IMR-90 (cell line): ENCODE measurements at regions of chr6 and their contacts with region 1.

Region 1: GRCh38 chr6:125314019-125314581 is 12.3 kb upstream of the HDDC2 start:
- DNase-seq: peak; percentile 61
- ATAC-seq: peak; percentile 88
- H3K4me3 ChIP-seq: no peak overlapping the region
- H3K27ac ChIP-seq: no peak overlapping the region
- H3K4me1 ChIP-seq: no peaks in the 10 kb centered on the region
- H3K27me3 ChIP-seq: peaks cover 11% of the 10 kb centered on the region
- CTCF ChIP-seq: peak; percentile 87
- POLR2A ChIP-seq: no peak
- RAD21 ChIP-seq: peak; percentile 80

Region 2: DNA sequence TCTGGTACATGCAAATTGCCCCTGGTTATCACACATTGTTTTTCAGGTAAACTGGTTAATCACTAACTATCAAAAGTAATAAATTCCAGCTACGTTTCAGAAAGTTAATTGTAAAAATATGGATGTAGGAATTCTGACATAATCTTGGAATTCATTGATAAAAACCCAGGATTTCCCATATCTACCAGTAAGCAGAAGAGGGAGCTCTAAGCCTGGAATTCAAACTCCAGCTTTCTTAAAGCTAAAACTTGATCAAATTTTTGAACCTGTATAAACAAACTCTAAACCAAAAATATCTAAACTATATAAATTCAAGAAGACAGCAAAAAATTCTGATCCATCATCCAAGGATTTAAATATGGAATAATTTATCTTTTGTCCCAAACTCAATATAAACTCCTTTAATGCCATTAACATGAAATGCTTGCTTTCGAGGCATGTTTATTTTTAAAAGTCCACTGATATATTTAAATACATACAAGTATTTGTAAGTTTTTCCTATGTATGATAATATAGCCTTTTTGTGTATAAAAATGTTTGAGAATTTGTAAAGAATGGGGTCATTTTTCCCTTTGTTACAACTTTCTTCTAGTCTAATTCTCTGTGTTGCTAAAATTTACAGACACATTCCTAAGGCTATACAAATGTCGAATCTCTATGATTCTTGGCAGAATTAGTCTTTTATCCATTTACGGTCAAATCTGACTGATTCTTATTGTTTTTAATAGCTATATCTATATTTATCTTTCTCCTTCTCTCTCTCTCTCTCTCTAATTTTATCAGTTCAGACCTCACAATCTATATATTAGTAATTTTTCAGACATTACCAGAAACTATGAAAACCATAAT is 443.3 kb before region 1 on chr6:
- CTCF ChIA-PET with region 1: no interaction called
- POLR2A ChIA-PET with region 1: no interaction called
- dilution Hi-C with region 1: no loop called
- in situ Hi-C with region 1: loop called (anchors 5 kb)
- intact Hi-C with region 1: loop called (anchors 1 kb)
- DNase-seq: peak; percentile 64
- ATAC-seq: peak; percentile 67
- H3K4me3 ChIP-seq: no peak overlapping the region
- H3K27ac ChIP-seq: no peak overlapping the region
- H3K4me1 ChIP-seq: peaks cover 2% of the 10 kb centered on the region; the same call in 1 of the 2 replicates
- H3K27me3 ChIP-seq: no peaks in the 10 kb centered on the region
- CTCF ChIP-seq: peak; percentile 83
- POLR2A ChIP-seq: no peak
- RAD21 ChIP-seq: peak; percentile 86

Region 3: GRCh38 chr6:124879110-124880011 is 434.7 kb before region 1 on chr6:
- CTCF ChIA-PET with region 1: no interaction called
- POLR2A ChIA-PET with region 1: no interaction called
- dilution Hi-C with region 1: no loop called
- in situ Hi-C with region 1: loop called (anchors 5 kb)
- intact Hi-C with region 1: no loop called
- DNase-seq: no peak
- ATAC-seq: no peak
- H3K4me3 ChIP-seq: no peak overlapping the region
- H3K27ac ChIP-seq: no peak overlapping the region
- H3K4me1 ChIP-seq: 0 out of 2 replicates have a peak, but pooled peaks cover 2% of the 10 kb centered on the region
- H3K27me3 ChIP-seq: no peaks in the 10 kb centered on the region
- CTCF ChIP-seq: no peak
- POLR2A ChIP-seq: no peak
- RAD21 ChIP-seq: no peak

Region 4: GRCh38 chr6:125749173-125749864 is 435.2 kb after region 1 on chr6 and contains the start of gene HEY2:
- CTCF ChIA-PET with region 1: interaction called, 6 read pairs
- POLR2A ChIA-PET with region 1: interaction called, 3 read pairs
- dilution Hi-C with region 1: no loop called
- in situ Hi-C with region 1: no loop called
- intact Hi-C with region 1: loop called (anchors 1 kb)
- DNase-seq: peak; percentile 81
- ATAC-seq: peak; percentile 99
- H3K4me3 ChIP-seq: peak within 1 kb of the TSS; percentile 60
- H3K27ac ChIP-seq: no peak within 1 kb of the TSS
- H3K4me1 ChIP-seq: peaks cover 10% of the 10 kb centered on the region
- H3K27me3 ChIP-seq: peaks cover 64% of the 10 kb centered on the region
- CTCF ChIP-seq: no peak
- POLR2A ChIP-seq: no peak
- RAD21 ChIP-seq: no peak
- total RNA-seq, gene HEY2: not detected in 2 replicates

Region 5: DNA sequence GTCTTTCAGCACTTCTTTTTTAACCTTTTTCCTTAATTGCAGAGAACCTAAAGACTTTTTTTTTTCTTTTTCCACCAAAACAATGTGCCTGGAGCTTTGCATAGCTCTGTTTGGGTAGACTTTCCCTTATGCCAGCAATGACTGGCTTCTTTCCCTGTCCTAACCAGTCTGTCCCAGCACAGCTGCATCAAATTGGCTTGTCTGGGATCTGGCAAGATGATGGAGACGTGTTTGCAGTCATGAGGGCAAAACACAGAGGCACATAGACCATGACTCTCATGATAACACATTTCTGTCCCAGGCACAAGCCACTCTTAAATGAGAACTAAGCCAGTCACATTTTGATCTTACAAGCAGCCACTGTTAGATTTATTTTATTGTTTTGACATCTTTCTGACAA is 451.8 kb after region 1 on chr6:
- CTCF ChIA-PET with region 1: interaction called, 3 read pairs
- POLR2A ChIA-PET with region 1: no interaction called
- dilution Hi-C with region 1: no loop called
- in situ Hi-C with region 1: loop called (anchors 5 kb)
- intact Hi-C with region 1: loop called (anchors 1 kb)
- DNase-seq: no peak
- ATAC-seq: no peak
- H3K4me3 ChIP-seq: no peak overlapping the region
- H3K27ac ChIP-seq: no peak overlapping the region
- H3K4me1 ChIP-seq: no peaks in the 10 kb centered on the region
- H3K27me3 ChIP-seq: peaks cover 17% of the 10 kb centered on the region
- CTCF ChIP-seq: no peak
- POLR2A ChIP-seq: no peak
- RAD21 ChIP-seq: no peak

Region 6: DNA sequence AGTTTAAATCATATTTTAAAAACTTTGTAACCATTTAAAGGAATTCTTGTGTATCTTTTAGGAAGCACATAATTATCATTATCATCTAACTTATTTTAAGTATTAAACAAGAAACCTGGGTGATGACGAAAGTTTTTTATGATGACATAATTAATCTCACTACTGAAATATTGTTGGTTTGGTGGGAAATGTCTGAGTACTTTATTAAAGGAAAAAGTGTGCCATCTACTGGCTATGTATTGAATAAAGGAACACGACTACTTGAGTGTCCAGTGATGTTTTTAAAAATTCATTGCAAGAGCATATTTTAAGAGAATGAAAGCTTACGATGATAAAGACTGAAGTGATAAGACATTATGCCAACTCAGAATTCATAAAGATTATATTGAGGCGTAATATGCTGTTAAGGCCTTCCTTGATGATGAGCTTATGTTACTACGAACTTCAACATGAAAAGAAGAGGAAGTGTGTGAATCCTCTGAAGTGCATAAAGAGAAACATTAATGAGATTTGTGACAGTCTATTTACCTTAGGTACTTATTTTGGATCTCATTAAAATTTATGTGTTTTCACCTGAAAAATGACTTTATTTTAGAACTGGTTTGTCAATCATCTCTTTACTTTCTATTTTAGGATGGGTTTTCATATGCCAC is 660.2 kb after region 1 on chr6:
- CTCF ChIA-PET with region 1: no interaction called
- POLR2A ChIA-PET with region 1: no interaction called
- dilution Hi-C with region 1: no loop called
- in situ Hi-C with region 1: loop called (anchors 10 kb)
- intact Hi-C with region 1: loop called (anchors 5 kb)
- DNase-seq: peak; percentile 68
- ATAC-seq: peak; percentile 72
- H3K4me3 ChIP-seq: no peak overlapping the region
- H3K27ac ChIP-seq: no peak overlapping the region
- H3K4me1 ChIP-seq: no peaks in the 10 kb centered on the region
- H3K27me3 ChIP-seq: no peaks in the 10 kb centered on the region
- CTCF ChIP-seq: peak; percentile 65
- POLR2A ChIP-seq: no peak
- RAD21 ChIP-seq: peak; percentile 62